Posterior vena cava (tissue), 2 donors: ENCODE measurements at regions of chr21 and their contacts with region 1.

Region 1: DNA sequence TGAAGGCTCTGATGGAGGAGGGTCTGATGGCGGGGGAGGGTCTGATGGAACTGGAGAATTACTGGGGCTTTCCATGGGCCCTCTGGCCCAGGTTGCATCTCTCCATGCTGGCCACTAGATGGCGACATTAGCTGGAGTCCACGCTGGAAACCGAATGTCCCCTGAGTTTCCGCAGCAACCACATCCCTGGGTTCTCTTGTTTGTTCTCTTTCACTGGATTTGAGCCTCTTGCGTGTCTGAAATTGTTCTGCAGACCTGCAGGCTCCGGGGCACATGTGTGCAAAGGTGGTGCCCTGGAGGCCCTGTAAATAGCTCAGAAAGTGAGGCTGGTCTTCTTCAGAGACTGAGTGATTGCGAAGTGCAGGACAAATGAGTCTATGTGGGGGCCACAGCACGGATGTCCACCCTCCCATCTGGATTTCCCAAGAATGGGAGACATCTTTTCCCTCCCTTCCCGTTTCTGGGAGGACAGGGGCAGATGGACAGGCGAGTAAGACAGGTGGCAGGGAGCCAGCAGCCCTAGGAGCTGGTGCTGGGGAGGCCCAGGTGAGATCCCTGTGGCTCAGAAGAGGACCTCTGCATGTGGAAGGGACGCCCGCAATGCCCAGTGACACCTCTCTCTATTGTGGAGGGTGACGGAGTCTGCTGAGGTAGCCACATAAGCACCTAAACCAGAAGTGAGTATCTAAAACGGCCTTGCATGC is 73.2 kb upstream of the ABCG1 start:
- DNase-seq: peak; percentile 84

Region 2: DNA sequence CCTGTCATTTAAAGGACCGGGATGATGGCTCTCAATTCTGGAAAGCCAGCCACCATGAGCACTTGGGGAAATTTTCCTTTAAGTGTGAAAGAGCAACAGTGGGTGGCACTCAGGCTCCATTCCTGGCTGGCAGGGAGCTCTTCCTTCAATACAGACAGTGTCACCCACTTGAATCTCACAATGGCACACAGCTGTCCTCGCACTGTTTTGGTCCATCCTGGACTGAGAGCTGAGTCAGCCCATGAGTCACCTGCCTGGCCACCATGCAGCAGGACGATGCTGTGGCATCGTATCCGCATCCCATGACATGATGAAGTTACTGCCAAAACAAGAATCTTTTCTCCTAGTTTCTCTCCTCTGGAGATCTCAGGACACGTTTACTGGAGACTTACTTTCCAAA is 643.8 kb before region 1 on chr21:
- intact Hi-C with region 1: no loop called
- DNase-seq: no peak

Region 3: DNA sequence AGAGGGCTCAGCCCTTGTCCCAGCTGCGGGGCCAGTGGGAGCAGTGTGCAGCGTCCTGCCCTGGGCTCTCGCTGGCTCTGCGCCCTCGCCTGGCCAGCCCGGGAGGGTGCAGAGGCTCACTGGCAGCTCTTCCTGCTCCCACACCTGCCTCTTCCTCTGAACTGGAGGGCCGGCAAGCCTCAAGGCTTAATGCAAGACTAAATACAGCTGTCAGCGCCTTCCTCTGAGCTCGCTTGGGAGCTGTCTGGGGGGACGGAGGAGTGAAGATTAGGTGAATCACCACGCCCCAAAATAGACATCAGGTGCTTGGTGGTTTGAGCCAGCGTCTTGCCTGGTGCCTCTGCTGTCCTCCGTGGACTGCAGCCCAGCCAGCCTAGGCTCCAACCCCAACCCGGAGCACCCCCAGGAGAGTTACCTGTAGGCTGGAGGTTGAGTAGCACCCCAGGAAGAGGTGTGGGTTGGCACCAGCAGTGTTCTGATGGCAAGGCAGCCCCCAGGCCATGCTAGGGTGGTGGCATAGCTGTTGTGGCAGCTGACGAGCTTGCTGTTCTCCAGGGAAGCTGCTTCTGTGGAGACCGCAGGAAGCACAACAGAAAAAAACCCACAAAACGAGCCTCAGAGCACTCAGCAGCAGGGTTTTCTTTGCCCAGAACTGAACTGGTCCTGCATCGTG is 37.7 kb before region 1 on chr21:
- intact Hi-C with region 1: no loop called
- DNase-seq: no peak

Region 4: DNA sequence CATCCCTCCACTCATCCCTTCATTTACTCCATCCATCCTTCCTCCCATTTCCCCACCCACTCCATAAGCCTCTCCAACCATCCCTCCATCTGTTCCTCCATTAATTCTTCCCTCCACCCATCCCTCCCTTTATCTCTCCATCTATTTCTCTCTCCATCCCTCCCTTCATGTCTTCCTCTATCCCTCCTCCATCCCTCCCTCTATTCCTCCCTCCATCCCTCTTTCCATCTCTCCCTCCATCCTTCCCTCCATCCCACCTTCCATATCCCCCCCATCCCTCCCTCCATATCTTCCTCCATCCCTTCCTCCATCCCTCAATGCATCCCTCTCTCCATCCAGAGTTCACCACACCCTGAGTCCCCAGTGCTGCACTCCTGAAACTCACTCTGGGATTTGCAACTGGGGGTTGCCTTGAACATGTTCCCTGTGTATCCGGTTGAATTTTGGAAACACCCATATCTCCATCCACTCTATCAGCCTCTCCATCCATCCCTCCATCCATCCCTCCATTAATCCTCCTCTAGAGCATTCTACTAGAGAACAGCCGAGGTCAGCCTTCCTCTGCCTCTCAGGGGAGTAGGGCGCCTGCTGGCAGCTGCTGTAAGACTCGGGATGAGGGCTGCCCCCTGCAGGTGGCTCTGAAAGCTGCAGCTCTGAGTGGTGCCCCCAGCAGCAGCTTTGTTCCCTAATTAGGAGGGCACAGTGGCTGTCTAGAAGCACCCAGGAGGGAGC is 112.6 kb after region 1 on chr21:
- intact Hi-C with region 1: loop called (anchors 5 kb)
- DNase-seq: peak; percentile 90

Region 5: DNA sequence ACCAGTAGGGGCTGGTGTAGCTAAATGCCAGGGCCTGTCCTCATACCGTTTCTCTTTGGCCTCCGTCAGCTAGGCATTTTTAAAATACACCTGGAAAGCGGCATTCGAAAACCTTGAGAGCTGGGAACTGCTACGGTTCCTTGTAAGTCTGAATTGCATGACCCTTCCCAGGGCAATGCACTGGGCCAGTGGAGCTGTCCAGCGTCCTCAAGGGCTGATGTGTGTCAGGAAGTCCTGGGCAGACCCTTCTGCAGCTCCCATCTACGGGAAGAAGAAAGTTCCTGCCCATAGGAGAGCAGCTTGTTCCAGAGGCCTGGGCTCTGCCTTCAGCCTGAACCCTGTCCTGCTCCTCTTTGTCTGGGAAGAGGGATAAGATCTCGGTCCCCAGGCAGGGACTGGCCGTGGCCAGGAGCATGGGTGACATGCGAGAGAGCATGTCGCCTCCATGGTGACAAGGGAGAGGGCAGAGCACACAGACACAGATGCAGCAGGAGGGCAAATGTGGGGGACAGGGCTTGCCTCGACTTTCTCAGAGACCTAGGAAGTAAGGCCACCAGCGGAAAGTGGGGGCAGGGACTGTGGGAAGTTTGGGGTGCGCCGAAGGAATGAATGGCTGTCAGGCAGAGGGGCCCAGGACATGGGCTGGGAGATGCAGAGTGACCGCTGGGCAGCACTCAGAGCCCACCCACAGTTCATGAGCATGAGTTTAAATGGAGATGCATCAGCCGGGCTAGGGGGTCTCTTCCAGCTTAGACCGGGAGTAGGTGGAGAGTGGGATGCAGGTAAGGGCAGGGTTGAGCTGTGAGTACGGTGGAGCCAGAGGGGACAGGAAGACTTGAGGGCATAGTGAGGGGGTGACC is 292.3 kb after region 1 on chr21:
- intact Hi-C with region 1: loop called in 1 of 2 experiments (anchors 10 kb)
- DNase-seq: peak; percentile 34

Region 6: GRCh38 chr21:42456457-42456856 is 310.7 kb after region 1 on chr21:
- intact Hi-C with region 1: loop called in 1 of 2 experiments (anchors 10 kb)
- DNase-seq: no peak